Sigmoid colon (tissue), 7 donors: ENCODE measurements at regions of chr22 and their contacts with region 1.

Region 1: GRCh38 chr22:44159221-44159620 is 21.5 kb upstream of the PARVG start:
- DNase-seq: peak; percentile 92
- H3K4me3 ChIP-seq: no peak overlapping the region
- H3K27ac ChIP-seq: peak overlapping the region; percentile 49 to 86 (median 82)
- H3K4me1 ChIP-seq: peaks cover 0 to 50% (median 39%) of the 10 kb centered on the region in 4 donors
- H3K27me3 ChIP-seq: no peaks in the 10 kb centered on the region
- CTCF ChIP-seq: no peak
- EP300 ChIP-seq: peak in 3 of 4 donors; percentile 64 to 90 (median 81)
- POLR2A ChIP-seq: no peak

Region 2: GRCh38 chr22:43993027-43993760 is 166.0 kb before region 1 on chr22:
- intact Hi-C with region 1: no loop called
- DNase-seq: peak; percentile 65
- H3K4me3 ChIP-seq: no peak overlapping the region
- H3K27ac ChIP-seq: no peak overlapping the region
- H3K4me1 ChIP-seq: peaks cover 0 to 8% (median 0%) of the 10 kb centered on the region in 4 donors
- H3K27me3 ChIP-seq: no peaks in the 10 kb centered on the region
- CTCF ChIP-seq: peak; percentile 90 to 95 (median 92)
- EP300 ChIP-seq: no peak
- POLR2A ChIP-seq: no peak

Region 3: GRCh38 chr22:44068422-44069191 is 90.6 kb before region 1 on chr22:
- intact Hi-C with region 1: no loop called
- DNase-seq: no peak
- H3K4me3 ChIP-seq: no peak overlapping the region
- H3K27ac ChIP-seq: peak overlapping the region in 2 of 4 donors; percentile 8 to 18
- H3K4me1 ChIP-seq: peaks cover 0 to 4% (median 0%) of the 10 kb centered on the region in 4 donors
- H3K27me3 ChIP-seq: no peaks in the 10 kb centered on the region
- CTCF ChIP-seq: no peak
- EP300 ChIP-seq: peak in 1 of 4 donors; percentile 12
- POLR2A ChIP-seq: no peak

Region 4: DNA sequence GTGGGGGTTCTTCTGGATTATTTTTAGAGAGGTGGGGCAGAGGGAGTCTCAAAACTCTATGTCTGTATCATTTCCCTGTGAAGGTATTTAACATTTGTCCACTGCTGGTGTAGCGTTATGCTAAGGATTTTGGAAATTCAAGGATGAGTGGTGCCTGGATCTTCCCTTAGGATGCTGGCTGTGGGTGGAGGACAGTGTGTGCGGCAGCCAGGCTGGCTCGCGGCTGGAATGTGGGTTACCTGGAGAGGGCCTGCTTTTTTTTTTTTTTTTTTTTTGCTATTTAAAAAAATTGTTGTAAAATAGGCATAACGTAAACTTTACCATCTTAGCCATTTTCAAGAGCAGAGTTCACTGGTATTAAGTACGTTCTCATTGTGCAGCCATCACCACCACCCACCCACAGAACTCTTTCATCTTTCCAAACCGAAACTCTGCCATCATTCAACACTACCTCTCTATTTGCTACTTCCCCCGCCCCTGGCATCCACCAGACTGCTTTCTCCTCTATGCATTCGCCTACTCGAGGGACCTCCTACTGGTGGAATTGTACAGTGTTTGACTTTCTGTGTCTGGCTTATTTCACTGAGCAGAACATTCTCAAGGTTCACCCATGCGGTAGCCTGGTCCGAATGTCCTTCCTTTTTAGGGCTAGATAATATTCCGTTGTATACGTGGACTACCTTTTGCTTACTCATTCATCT is 68.0 kb before region 1 on chr22:
- intact Hi-C with region 1: loop called (anchors 2 kb)
- DNase-seq: peak; percentile 62
- H3K4me3 ChIP-seq: no peak overlapping the region
- H3K27ac ChIP-seq: peak overlapping the region in 3 of 4 donors; percentile 55 to 75 (median 64)
- H3K4me1 ChIP-seq: peaks cover 0 to 51% (median 45%) of the 10 kb centered on the region in 4 donors
- H3K27me3 ChIP-seq: no peaks in the 10 kb centered on the region
- CTCF ChIP-seq: peak; percentile 16 to 33 (median 26)
- EP300 ChIP-seq: peak in 2 of 4 donors; percentile 5 to 47
- POLR2A ChIP-seq: no peak

Region 5: GRCh38 chr22:44272401-44272771 is 113.2 kb after region 1 on chr22:
- intact Hi-C with region 1: no loop called
- DNase-seq: no peak
- H3K4me3 ChIP-seq: no peak overlapping the region
- H3K27ac ChIP-seq: peak overlapping the region in 3 of 4 donors; percentile 43 to 64 (median 47)
- H3K4me1 ChIP-seq: peaks cover 0 to 45% (median 38%) of the 10 kb centered on the region in 4 donors
- H3K27me3 ChIP-seq: no peaks in the 10 kb centered on the region
- CTCF ChIP-seq: no peak
- EP300 ChIP-seq: no peak
- POLR2A ChIP-seq: no peak